PC-9 (cell line): ENCODE measurements at regions of chr9 and their contacts with region 1.

Region 1: GRCh38 chr9:96217754-96218693 is 84.0 kb downstream of the HSD17B3 start:
- DNase-seq: peak; percentile 39 to 78
- H3K4me3 ChIP-seq: no peak overlapping the region
- H3K27ac ChIP-seq: no peak overlapping the region
- H3K4me1 ChIP-seq: no peaks in the 10 kb centered on the region
- H3K27me3 ChIP-seq: peaks cover 24% of the 10 kb centered on the region
- CTCF ChIP-seq: peak; percentile 85

Region 2: GRCh38 chr9:94672811-94673487 is 1545.1 kb before region 1 on chr9:
- CTCF ChIA-PET with region 1: no interaction called
- POLR2A ChIA-PET with region 1: no interaction called
- intact Hi-C with region 1: loop called (anchors 5 kb)
- DNase-seq: peak in 1 of 2 experiments; percentile 85
- H3K4me3 ChIP-seq: no peak overlapping the region; the same call in 1 of the 2 replicates
- H3K27ac ChIP-seq: peak overlapping the region; percentile 61
- H3K4me1 ChIP-seq: peaks cover 19% of the 10 kb centered on the region
- H3K27me3 ChIP-seq: no peaks in the 10 kb centered on the region
- CTCF ChIP-seq: no peak

Region 3: GRCh38 chr9:94984891-94985476 is 1233.0 kb before region 1 on chr9:
- CTCF ChIA-PET with region 1: no interaction called
- POLR2A ChIA-PET with region 1: interaction called, 22 read pairs
- intact Hi-C with region 1: no loop called
- DNase-seq: no peak
- H3K4me3 ChIP-seq: no peak overlapping the region
- H3K27ac ChIP-seq: no peak overlapping the region
- H3K4me1 ChIP-seq: no peaks in the 10 kb centered on the region
- H3K27me3 ChIP-seq: no peaks in the 10 kb centered on the region
- CTCF ChIP-seq: no peak

Region 4: GRCh38 chr9:95305770-95306492 is 912.1 kb before region 1 on chr9:
- CTCF ChIA-PET with region 1: no interaction called
- POLR2A ChIA-PET with region 1: no interaction called
- intact Hi-C with region 1: loop called (anchors 10 kb)
- DNase-seq: peak in 1 of 2 experiments; percentile 60
- H3K4me3 ChIP-seq: 0 out of 2 replicates have a peak overlapping the region, but pooled peaks have one; percentile 14
- H3K27ac ChIP-seq: peak overlapping the region; percentile 43
- H3K4me1 ChIP-seq: peaks cover 14% of the 10 kb centered on the region
- H3K27me3 ChIP-seq: no peaks in the 10 kb centered on the region
- CTCF ChIP-seq: no peak

Region 5: DNA sequence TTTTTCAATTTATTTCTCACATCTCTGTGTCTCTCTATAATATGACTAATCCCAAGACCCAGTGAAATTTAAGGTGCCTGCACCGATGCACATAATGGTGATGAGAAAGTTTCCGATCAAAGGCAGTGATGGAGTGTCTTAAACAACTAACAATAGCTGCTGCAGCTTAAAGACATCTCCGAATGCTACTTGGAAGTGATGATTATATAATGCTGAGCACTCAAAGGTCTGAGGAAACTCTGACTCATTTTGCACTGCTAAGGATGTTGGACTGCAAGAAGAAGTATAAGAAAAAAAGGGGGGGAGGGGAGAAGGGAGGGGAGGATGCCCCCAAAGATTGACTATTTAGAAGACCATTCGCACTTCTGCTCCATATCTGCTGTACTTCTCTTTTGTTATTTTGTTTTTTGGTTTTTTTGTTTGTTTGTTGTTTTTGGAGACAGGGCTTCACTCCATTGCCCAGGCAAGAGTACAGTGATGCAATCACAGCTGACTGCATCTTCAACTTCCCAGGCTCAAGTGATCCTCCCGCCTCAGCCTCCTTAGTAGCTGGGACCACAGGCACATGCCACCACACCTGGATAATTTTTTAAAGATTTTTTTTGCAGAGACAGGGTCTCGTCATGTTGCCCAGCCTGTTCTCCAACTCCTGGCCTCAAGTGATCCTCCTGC is 108.2 kb before region 1 on chr9:
- CTCF ChIA-PET with region 1: no interaction called
- POLR2A ChIA-PET with region 1: no interaction called
- intact Hi-C with region 1: no loop called
- DNase-seq: no peak
- H3K4me3 ChIP-seq: no peak overlapping the region
- H3K27ac ChIP-seq: no peak overlapping the region
- H3K4me1 ChIP-seq: no peaks in the 10 kb centered on the region
- H3K27me3 ChIP-seq: peaks cover 38% of the 10 kb centered on the region; the same call in 1 of the 2 replicates
- CTCF ChIP-seq: no peak

Region 6: GRCh38 chr9:96317335-96317980 is 99.4 kb after region 1 on chr9:
- CTCF ChIA-PET with region 1: interaction called, 8 read pairs
- POLR2A ChIA-PET with region 1: no interaction called
- intact Hi-C with region 1: loop called (anchors 1 kb)
- DNase-seq: peak; percentile 34 to 43
- H3K4me3 ChIP-seq: no peak overlapping the region
- H3K27ac ChIP-seq: no peak overlapping the region
- H3K4me1 ChIP-seq: no peaks in the 10 kb centered on the region
- H3K27me3 ChIP-seq: no peaks in the 10 kb centered on the region
- CTCF ChIP-seq: peak; percentile 86